ENCODE measurements at regions of chr22 and their contacts with region 1.

Region 1: DNA sequence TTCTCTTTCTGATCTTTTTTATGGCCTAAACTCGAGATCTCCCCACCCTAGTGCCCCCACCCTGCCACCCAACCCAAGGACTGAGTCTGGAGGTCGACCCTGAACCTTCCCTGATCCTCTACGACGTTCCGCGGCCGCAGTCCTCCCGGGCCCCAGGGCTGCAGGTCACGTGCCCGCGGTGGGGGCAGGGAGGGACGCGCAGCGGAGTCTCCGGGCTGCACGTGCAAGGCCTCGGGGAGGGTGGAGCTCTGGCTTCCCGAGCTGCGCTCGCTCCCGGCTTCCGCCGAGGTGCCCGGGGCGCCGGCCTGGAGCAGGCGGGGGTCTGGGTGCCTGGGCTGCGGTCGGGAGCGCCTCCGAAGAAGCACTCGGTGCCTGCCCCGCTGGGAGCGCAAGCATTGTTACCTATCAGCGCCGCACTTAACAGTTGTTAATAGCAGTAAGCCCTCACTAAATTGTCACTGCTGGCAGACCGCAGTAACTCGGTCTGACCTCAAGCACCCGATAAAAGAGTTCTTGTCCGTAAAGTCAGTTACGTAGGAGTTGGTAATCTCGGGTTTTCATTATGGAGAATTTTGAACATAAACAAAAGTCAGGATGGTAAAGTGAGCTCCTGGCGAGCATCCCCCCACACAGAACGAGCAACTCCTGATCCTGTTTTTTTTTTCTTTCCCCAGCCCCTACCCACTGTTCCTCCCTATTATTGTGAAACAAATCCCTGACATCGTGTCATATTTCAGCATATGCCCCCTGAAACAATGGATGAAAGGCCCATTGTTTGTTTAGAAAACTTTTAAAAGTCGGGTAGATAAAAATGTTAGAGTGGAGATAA is 69.7 kb upstream of the EP300 start:
- DNase-seq: peak; percentile 91
- ATAC-seq: peak; percentile 80
- H3K4me3 Mint-ChIP-seq: peak overlapping the region; percentile 91
- H3K27ac Mint-ChIP-seq: peak overlapping the region; percentile 86
- H3K4me1 Mint-ChIP-seq: peaks cover 14% of the 10 kb centered on the region
- H3K27me3 Mint-ChIP-seq: peaks cover 2% of the 10 kb centered on the region

Region 2: GRCh38 chr22:41106122-41106968 is 83.7 kb after region 1 on chr22:
- CTCF ChIA-PET with region 1: no interaction called
- POLR2A ChIA-PET with region 1: interaction called, 4 read pairs
- intact Hi-C with region 1: loop called in 1 of 2 experiments (anchors 5 kb)
- DNase-seq: peak; percentile 17
- ATAC-seq: peak; percentile 63
- H3K4me3 Mint-ChIP-seq: peak overlapping the region; percentile 1
- H3K27ac Mint-ChIP-seq: peak overlapping the region; percentile 84
- H3K4me1 Mint-ChIP-seq: peaks cover 59% of the 10 kb centered on the region
- H3K27me3 Mint-ChIP-seq: no peaks in the 10 kb centered on the region

Region 3: GRCh38 chr22:41197038-41197972 is 174.6 kb after region 1 on chr22:
- CTCF ChIA-PET with region 1: no interaction called
- POLR2A ChIA-PET with region 1: no interaction called
- intact Hi-C with region 1: loop called in 1 of 2 experiments (anchors 2 kb)
- DNase-seq: peak; percentile 89
- ATAC-seq: peak; percentile 82
- H3K4me3 Mint-ChIP-seq: peak overlapping the region; percentile 77
- H3K27ac Mint-ChIP-seq: no peak overlapping the region
- H3K4me1 Mint-ChIP-seq: peaks cover 11% of the 10 kb centered on the region
- H3K27me3 Mint-ChIP-seq: no peaks in the 10 kb centered on the region

Region 4: DNA sequence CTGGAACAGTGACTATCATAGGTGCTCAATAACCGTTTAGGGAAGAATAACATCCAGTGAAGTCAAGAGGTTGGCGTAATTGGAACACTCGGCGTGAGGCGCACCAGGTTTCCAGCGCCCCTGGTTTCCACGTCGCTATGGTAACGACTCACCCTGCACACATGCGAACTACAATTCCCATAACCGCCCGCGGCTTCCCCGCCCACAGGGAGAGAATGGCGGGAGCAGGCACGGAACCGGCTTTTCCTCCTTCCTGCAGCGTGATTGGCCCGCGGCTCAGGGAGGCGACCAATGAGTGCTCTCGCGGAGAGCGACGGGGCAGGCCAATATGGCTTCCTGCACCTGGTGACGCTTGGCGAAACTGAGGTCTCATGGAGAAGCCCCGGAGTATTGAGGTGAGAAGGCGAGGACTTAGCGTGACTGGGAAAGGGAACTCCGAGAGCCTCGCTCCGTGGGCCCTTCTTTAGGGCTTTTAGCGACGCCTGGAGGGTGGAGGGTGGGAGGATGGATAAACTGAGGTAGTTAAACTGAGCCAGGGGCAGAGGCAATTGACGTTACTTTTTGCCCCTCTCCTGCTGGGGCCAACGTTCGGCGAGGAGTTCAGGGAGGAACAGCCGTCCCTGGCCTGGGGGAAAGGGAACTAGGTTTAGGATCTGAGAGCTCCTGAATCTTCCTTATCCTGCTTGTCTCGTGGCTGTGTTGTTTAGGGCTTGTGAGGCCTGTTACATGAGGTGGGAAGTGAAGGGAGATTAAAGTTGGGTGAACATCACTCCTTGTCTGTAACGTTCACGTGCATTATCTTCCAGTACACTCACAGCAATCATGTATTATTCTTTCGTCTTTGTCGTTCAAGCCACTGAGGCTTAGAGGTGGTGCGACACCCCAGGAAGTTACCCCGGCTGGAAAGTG is 182.6 kb after region 1 on chr22 and contains the start of gene L3MBTL2:
- CTCF ChIA-PET with region 1: no interaction called
- POLR2A ChIA-PET with region 1: no interaction called
- intact Hi-C with region 1: loop called in 1 of 2 experiments (anchors 1 kb)
- DNase-seq: peak; percentile 100
- ATAC-seq: peak; percentile 100
- H3K4me3 Mint-ChIP-seq: peak within 1 kb of the TSS; percentile 86
- H3K27ac Mint-ChIP-seq: peak within 1 kb of the TSS; percentile 89
- H3K4me1 Mint-ChIP-seq: peaks cover 20% of the 10 kb centered on the region
- H3K27me3 Mint-ChIP-seq: peaks cover 10% of the 10 kb centered on the region
- total RNA-seq, gene L3MBTL2: 24.4 to 25.1 TPM

Region 5: DNA sequence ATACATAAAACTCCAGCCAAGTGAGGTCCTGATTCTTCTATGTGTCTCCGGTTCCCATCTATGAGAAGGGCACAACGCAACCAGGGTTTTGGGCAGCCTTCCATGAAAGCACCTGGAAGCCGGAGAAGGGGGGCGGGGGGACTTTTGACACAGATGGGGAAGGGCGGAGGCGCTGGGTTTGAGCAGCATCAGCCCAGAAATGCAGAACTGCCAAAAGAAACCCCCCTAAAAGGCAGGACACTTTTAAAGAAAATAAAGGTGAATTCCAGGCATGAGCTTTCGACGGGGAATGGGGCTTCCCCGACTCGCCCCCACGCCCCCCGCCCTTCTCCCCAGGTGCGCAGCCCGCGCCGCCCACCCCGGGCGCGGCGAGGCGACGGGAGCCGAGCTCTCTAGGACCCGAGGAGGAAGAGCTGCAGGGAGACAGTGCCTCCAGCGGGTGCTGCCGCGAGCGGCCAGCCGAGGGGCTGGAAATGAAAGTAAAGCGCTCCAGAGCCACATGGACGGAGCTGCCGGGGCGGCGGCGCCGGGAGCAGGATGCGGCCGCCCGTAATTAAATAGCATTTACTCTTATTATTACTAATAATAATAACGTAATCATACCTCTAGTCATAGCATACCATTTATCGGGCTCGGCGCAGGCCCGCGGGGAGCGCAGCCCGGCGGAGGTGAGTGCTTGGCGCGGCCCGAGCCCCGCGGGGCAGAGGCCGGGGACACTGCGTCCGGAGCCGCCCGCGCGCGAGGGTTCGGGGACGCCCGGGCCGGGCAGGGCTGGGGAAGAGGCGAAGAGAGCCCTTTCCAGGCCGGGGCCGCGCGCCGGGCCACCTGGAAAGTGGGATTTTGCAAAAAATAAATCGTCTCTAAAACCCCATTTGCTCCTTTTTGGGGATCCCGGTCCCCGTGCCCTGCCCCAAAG is 278.7 kb after region 1 on chr22 and contains the start of gene ZC3H7B:
- CTCF ChIA-PET with region 1: no interaction called
- POLR2A ChIA-PET with region 1: no interaction called
- intact Hi-C with region 1: loop called in 1 of 2 experiments (anchors 1 kb)
- DNase-seq: peak; percentile 92
- ATAC-seq: peak; percentile 96
- H3K4me3 Mint-ChIP-seq: peak within 1 kb of the TSS; percentile 74
- H3K27ac Mint-ChIP-seq: peak within 1 kb of the TSS; percentile 76
- H3K4me1 Mint-ChIP-seq: peaks cover 31% of the 10 kb centered on the region
- H3K27me3 Mint-ChIP-seq: no peaks in the 10 kb centered on the region
- total RNA-seq, gene ZC3H7B: 41.7 to 43.4 TPM

Region 6: GRCh38 chr22:41543854-41544670 is 521.4 kb after region 1 on chr22 and contains the start of gene POLR3H:
- CTCF ChIA-PET with region 1: no interaction called
- POLR2A ChIA-PET with region 1: no interaction called
- intact Hi-C with region 1: loop called in 1 of 2 experiments (anchors 1 kb)
- DNase-seq: peak; percentile 99
- ATAC-seq: peak; percentile 99
- H3K4me3 Mint-ChIP-seq: peak within 1 kb of the TSS; percentile 81
- H3K27ac Mint-ChIP-seq: peak within 1 kb of the TSS; percentile 90
- H3K4me1 Mint-ChIP-seq: peaks cover 40% of the 10 kb centered on the region
- H3K27me3 Mint-ChIP-seq: no peaks in the 10 kb centered on the region
- total RNA-seq, gene POLR3H: 18.3 to 24.6 TPM